ENCODE measurements at regions of chr1 and their contacts with region 1.

Region 1: DNA sequence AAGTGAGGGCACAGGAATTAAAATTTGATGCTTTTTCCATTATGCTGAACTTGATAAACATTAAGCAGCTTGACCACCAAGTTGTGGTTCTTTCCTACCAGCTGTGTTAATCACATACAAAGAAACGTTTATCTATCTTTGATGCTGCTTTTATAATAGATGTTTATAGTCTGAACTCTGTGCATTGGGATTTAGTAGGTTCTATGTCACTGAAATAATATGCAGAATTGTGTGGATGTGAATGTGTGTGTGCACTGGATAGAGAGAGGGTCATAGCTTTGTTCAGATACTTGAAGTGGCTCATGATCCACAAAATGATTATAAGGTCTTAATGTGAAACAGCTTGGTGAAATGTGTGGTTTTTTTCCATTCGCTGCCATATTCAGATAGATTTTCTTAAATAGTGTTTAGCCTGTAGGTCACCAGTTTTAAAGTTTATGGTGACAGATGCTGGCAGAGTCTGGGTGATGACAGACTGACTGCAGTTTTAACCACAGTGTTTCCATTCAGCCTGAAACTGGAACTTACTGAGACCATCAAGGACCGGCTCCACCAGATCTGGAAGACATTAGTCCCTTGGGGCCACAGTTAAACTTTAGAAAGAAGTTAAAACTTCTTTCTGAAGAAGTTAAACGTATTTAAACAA is 10.2 kb downstream of the DDI2 start:
- DNase-seq: no peak

Region 2: GRCh38 chr1:15678578-15678977 is 51.1 kb after region 1 on chr1:
- intact Hi-C with region 1: loop called in 1 of 2 experiments (anchors 10 kb)
- DNase-seq: no peak

Region 3: GRCh38 chr1:15885701-15886610 is 258.5 kb after region 1 on chr1:
- intact Hi-C with region 1: no loop called
- DNase-seq: peak; percentile 99